Posterior cingulate gyrus (tissue), 11 donors: ENCODE measurements at regions of chr2 and their contacts with region 1.

Region 1: GRCh38 chr2:191571163-191571769 is 106.7 kb upstream of the NABP1 start:
- DNase-seq: no peak

Region 2: DNA sequence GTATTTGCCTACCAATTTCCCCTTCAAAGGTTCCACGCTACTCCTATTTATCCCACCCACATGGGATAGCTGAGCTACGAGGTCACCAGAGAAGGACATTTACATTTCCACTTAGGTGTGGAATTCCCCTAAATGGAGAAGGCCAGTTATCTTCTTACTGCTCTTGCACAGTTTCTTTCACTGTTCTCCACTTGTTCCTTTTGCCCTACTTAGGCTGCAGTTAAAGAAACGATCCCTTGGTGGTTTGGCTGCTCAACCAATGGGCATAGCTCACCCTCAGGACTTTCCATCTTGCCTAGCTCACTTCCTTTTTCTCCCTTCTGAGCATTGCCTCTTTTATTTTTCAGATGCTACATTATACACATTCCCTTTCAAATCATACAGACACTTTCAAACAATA is 95.5 kb after region 1 on chr2:
- intact Hi-C with region 1: no loop called
- DNase-seq: no peak

Region 3: DNA sequence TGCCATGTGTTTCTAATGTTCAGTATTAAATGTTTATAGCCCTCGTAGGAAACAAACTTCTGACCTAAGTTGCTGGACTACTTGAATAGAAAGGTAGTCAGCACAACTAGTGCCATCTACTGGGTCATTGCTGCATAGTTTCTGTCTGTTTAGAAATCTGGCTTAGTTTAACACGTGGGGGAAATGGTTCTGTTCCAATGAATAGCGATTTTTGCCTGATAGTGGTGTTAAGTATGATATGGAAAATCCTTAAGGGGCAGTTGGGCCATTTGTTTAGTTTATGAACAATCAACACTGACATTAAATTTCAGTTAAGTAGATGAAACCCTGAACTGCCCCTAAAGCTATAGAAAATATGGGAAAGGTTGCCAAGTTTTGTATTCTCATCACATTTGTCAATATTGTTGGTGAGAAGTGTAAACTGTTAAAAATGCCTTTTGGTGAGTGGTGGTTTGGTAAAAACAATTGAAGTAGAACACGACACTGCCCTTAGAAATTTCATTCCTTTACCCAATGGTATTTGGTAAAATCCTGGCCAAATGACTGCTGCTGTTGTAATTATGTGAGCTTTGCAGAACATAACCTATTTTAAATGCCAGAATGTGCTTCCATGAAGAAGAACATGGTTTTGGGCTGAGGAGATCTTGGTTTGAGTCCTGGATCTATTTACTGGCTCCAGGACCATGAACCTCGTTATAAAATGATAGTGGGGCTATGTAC is 119.9 kb after region 1 on chr2:
- intact Hi-C with region 1: loop called (anchors 2 kb)
- DNase-seq: peak in 2 of 10 donors; percentile 8 to 27

Region 4: GRCh38 chr2:191724015-191724414 is 152.7 kb after region 1 on chr2:
- intact Hi-C with region 1: no loop called
- DNase-seq: no peak

Region 5: DNA sequence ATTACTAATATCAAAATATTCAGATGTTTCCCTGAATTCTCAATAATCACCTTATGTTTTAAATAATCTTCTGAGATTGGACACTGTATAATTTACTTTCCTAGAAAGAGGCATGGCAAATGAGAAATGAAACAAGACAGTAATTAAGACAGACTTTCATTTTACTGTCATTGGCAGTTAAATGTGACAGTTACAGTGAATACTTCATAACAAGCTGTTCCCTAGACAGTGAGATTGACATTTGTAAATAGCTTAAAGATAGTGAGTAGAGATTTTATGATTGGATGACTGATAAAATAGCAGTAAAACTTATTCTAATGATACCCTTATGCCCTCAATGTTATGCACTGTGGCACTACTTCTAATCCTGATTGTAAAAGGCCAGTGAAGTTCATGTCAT is 1148.4 kb after region 1 on chr2:
- intact Hi-C with region 1: no loop called
- DNase-seq: no peak